Activated CD4-positive, alpha-beta T cell treated with anti-CD3 and anti-CD28 coated beads, Interleukin-2, amount 10 ng/mL, durations not matched to agents 7 days and 5 days (primary cell): ENCODE measurements at regions of chr22 and their contacts with region 1.

Region 1: DNA sequence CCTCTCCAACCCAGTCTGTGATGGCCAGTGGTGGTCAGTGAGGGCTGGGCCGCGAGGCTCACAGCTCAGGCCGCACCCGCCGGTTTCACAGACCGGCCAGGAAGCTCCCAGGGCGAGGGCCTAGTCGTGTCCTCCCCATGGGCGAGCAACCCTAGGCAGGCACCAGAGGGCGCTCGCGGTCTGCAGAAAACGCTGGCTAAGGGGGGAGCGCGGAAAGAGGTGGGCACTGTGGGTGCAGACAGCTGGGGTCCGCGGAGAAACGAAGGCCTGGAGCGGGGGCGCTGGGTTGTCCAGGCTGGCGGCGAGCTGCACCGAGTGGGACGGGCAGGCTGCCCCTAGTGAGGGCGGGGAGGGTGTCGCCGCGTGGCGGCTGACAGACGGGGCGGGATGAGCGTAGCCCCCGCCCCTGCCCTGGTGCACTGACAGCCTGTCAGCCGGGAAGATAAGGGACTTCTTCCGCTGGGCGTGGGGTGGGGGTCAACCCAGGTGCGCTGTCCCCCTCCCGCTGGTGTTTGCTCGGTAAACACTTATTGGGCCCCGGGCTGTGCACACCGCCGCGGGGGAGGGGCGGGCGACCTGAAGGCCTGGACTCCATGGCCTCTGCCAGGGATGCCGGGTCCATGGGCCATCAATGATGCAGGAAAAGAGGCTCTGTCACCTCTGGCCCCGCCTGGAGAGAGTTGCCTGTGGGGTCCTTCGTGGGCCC is 7.5 kb downstream of the GP1BB start:
- DNase-seq: peak; percentile 85
- H3K4me3 Mint-ChIP-seq: peak overlapping the region; percentile 71
- H3K27ac Mint-ChIP-seq: peak overlapping the region; percentile 78
- H3K4me1 Mint-ChIP-seq: peaks cover 3% of the 10 kb centered on the region
- H3K27me3 Mint-ChIP-seq: no peaks in the 10 kb centered on the region

Region 2: GRCh38 chr22:19663286-19663815 is 67.5 kb before region 1 on chr22:
- CTCF ChIA-PET with region 1: no interaction called
- POLR2A ChIA-PET with region 1: no interaction called
- DNase-seq: no peak
- H3K4me3 Mint-ChIP-seq: no peak overlapping the region
- H3K27ac Mint-ChIP-seq: no peak overlapping the region
- H3K4me1 Mint-ChIP-seq: no peaks in the 10 kb centered on the region
- H3K27me3 Mint-ChIP-seq: no peaks in the 10 kb centered on the region

Region 3: GRCh38 chr22:19890502-19891316 is 159.9 kb after region 1 on chr22:
- CTCF ChIA-PET with region 1: interaction called, 11 read pairs
- POLR2A ChIA-PET with region 1: no interaction called
- DNase-seq: no peak
- H3K4me3 Mint-ChIP-seq: no peak overlapping the region
- H3K27ac Mint-ChIP-seq: peak overlapping the region; percentile 93
- H3K4me1 Mint-ChIP-seq: peaks cover 71% of the 10 kb centered on the region
- H3K27me3 Mint-ChIP-seq: no peaks in the 10 kb centered on the region

Region 4: GRCh38 chr22:19909350-19910179 is 178.8 kb after region 1 on chr22:
- CTCF ChIA-PET with region 1: interaction called, 27 read pairs
- POLR2A ChIA-PET with region 1: no interaction called
- DNase-seq: peak; percentile 87
- H3K4me3 Mint-ChIP-seq: no peak overlapping the region
- H3K27ac Mint-ChIP-seq: peak overlapping the region; percentile 69
- H3K4me1 Mint-ChIP-seq: peaks cover 4% of the 10 kb centered on the region
- H3K27me3 Mint-ChIP-seq: no peaks in the 10 kb centered on the region

Region 5: GRCh38 chr22:19948057-19948760 is 217.4 kb after region 1 on chr22:
- CTCF ChIA-PET with region 1: interaction called, 12 read pairs
- POLR2A ChIA-PET with region 1: no interaction called
- DNase-seq: no peak
- H3K4me3 Mint-ChIP-seq: no peak overlapping the region
- H3K27ac Mint-ChIP-seq: no peak overlapping the region
- H3K4me1 Mint-ChIP-seq: peaks cover 20% of the 10 kb centered on the region
- H3K27me3 Mint-ChIP-seq: no peaks in the 10 kb centered on the region